CD4-positive, alpha-beta memory T cell (primary cell): ENCODE measurements at regions of chr19 and their contacts with region 1.

Region 1: GRCh38 chr19:58182989-58183816 is at the start of gene ZNF274:
- DNase-seq: peak; percentile 92 to 94 (median 93)
- H3K4me3 ChIP-seq: peak within 1 kb of the TSS; percentile 97 to 100
- H3K4me3 Mint-ChIP-seq: peak within 1 kb of the TSS; percentile 86 to 97 (median 92)
- H3K27ac ChIP-seq: peak within 1 kb of the TSS; percentile 97
- H3K27ac Mint-ChIP-seq: peak within 1 kb of the TSS; percentile 97 to 99 (median 99)
- H3K4me1 ChIP-seq: peaks cover 20% of the 10 kb centered on the region
- H3K4me1 Mint-ChIP-seq: peaks cover 12 to 25% (median 18%) of the 10 kb centered on the region in 4 donors
- H3K27me3 ChIP-seq: no peaks in the 10 kb centered on the region
- H3K27me3 Mint-ChIP-seq: no peaks in the 10 kb centered on the region
- total RNA-seq, gene ZNF274: 76.5 to 77.1 TPM

Region 2: DNA sequence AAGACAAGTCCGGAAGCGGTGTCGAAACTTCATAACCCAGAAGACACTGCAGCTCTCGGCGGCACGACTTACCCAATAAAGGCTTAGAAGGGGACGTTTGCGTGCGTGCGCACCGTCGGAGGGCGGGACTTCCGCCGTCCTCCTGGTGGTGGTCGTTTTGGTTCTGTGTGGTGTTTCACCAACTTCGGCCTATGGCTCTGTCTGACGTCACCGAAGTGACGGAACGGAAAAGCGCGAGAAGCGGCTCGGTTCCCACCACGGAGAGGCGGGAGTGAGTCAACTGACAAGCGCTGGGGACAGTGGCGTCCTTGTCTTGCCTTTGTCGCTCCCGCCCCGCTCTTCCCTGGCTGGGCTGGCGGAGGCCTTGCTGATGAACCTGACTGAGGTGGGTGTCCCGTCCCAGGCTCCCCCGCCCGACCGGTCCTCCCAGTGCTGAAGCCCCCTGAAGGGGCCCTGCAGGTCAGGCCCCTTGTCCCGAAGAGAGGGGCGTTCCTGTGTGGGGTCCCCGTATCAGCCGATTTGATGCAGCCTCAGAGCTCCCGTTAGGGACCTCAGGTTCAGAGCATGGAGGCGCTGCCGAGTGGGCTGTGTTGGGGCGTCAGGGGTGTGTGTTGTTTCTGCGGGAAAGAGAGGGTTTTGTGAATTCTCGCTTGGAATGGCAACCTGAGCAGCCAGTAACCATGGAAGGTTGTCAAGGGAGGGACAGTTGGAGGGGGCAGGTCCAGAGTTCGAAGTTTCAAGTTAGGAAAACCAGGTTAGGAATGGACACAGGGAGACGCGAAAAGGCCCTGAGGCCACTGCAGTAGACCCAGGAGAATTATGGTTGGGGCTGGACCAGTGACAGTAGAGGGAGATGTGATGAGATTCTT is 793.2 kb before region 1 on chr19 and contains the start of gene ZNF548:
- CTCF ChIA-PET with region 1: no interaction called
- POLR2A ChIA-PET with region 1: interaction called, 8 read pairs
- intact Hi-C with region 1: loop called (anchors 1 kb)
- DNase-seq: peak; percentile 93 to 100 (median 95)
- H3K4me3 ChIP-seq: peak within 1 kb of the TSS; percentile 52 to 62
- H3K4me3 Mint-ChIP-seq: peak within 1 kb of the TSS; percentile 97 to 99 (median 98)
- H3K27ac ChIP-seq: peak within 1 kb of the TSS; percentile 95
- H3K27ac Mint-ChIP-seq: peak within 1 kb of the TSS; percentile 98 to 100 (median 99)
- H3K4me1 ChIP-seq: peaks cover 22% of the 10 kb centered on the region
- H3K4me1 Mint-ChIP-seq: peaks cover 22 to 41% (median 31%) of the 10 kb centered on the region in 4 donors
- H3K27me3 ChIP-seq: no peaks in the 10 kb centered on the region
- H3K27me3 Mint-ChIP-seq: peaks cover 0 to 3% of the 10 kb centered on the region in 2 donors
- total RNA-seq, gene ZNF548: 85.4 to 103 TPM

Region 3: GRCh38 chr19:57964748-57965147 is 218.5 kb before region 1 on chr19:
- CTCF ChIA-PET with region 1: no interaction called
- POLR2A ChIA-PET with region 1: no interaction called
- intact Hi-C with region 1: no loop called
- DNase-seq: no peak
- H3K4me3 ChIP-seq: no peak overlapping the region
- H3K4me3 Mint-ChIP-seq: no peak overlapping the region
- H3K27ac ChIP-seq: no peak overlapping the region
- H3K27ac Mint-ChIP-seq: no peak overlapping the region
- H3K4me1 ChIP-seq: no peaks in the 10 kb centered on the region
- H3K4me1 Mint-ChIP-seq: no peaks in the 10 kb centered on the region
- H3K27me3 ChIP-seq: no peaks in the 10 kb centered on the region
- H3K27me3 Mint-ChIP-seq: no peaks in the 10 kb centered on the region

Region 4: DNA sequence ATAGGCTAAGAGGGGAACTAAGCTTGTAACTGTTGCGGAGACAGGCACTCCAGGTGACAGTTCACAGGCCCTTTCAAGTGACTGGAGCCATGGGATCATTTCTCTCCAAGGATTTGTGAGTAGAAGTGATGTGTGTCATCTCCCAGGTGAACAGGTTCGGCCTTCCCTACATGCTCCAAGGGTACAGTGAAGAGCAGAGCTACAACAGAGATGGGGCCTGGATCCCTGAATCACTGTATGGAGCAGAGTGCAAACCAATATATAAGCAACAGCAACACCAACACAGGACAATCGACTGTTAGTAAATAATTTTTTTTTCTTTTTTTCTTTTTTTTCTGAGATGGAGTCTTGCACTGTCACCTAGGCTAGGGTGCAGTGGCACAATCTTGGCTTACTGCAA is 100.2 kb before region 1 on chr19:
- CTCF ChIA-PET with region 1: no interaction called
- POLR2A ChIA-PET with region 1: no interaction called
- intact Hi-C with region 1: no loop called
- DNase-seq: no peak
- H3K4me3 ChIP-seq: no peak overlapping the region
- H3K4me3 Mint-ChIP-seq: no peak overlapping the region
- H3K27ac ChIP-seq: no peak overlapping the region
- H3K27ac Mint-ChIP-seq: no peak overlapping the region
- H3K4me1 ChIP-seq: no peaks in the 10 kb centered on the region
- H3K4me1 Mint-ChIP-seq: no peaks in the 10 kb centered on the region
- H3K27me3 ChIP-seq: no peaks in the 10 kb centered on the region
- H3K27me3 Mint-ChIP-seq: no peaks in the 10 kb centered on the region

Region 5: GRCh38 chr19:58154679-58155648 is 28.2 kb before region 1 on chr19:
- CTCF ChIA-PET with region 1: interaction called, 3 read pairs
- POLR2A ChIA-PET with region 1: interaction called, 5 read pairs
- intact Hi-C with region 1: loop called (anchors 2 kb)
- DNase-seq: peak; percentile 92 to 99 (median 96)
- H3K4me3 ChIP-seq: peak overlapping the region; percentile 88
- H3K4me3 Mint-ChIP-seq: peak overlapping the region; percentile 71 to 89 (median 84)
- H3K27ac ChIP-seq: peak overlapping the region; percentile 80
- H3K27ac Mint-ChIP-seq: peak overlapping the region; percentile 41 to 85 (median 69)
- H3K4me1 ChIP-seq: peaks cover 16% of the 10 kb centered on the region
- H3K4me1 Mint-ChIP-seq: peaks cover 5 to 24% (median 10%) of the 10 kb centered on the region in 4 donors
- H3K27me3 ChIP-seq: no peaks in the 10 kb centered on the region
- H3K27me3 Mint-ChIP-seq: no peaks in the 10 kb centered on the region

Region 6: DNA sequence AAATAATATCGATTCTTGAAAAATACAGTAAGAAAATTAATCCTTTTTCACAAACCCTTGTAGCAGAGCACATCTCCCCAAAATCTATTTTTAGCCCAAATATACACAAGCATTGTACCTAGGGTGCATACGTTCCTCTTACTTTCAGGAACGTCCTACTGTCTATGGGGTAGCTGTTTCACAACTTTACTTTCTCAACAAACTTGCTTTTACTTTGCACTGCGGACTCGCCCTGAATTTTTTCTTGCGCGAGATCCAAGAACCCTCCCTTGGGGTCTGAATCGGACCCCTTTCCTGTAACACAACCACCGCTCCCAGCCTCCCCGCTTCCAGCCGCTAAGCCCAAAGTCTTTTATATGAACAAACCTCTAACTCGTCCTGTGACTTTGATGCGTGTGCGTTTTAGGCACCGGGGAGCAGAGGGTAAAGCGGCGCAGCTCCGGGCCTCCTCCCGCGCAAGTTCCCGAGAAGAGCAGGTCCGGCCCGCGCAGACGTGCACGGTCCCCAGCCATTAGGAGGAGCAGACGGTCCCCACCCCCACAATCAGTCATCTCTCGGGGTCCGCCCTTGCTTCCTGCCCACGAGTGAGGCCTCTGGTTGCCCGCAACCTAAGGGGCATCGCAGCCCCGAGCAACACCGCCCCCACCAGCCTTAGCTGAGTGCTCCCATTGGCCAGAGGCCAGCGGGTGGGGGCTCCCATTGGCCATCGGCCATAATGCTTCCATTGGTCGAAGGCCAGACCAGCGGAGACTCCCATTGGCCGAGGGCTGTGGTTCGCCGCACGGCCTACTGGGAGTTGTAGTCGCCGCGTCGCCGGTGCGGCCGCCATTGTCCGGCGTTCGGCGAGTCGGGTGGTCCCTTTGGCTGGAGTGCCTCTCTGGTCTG is 95.2 kb after region 1 on chr19 and contains the start of gene ZNF8:
- CTCF ChIA-PET with region 1: no interaction called
- POLR2A ChIA-PET with region 1: interaction called, 28 read pairs
- intact Hi-C with region 1: loop called (anchors 1 kb)
- DNase-seq: peak; percentile 93 to 97 (median 95)
- H3K4me3 ChIP-seq: peak within 1 kb of the TSS; percentile 62 to 92
- H3K4me3 Mint-ChIP-seq: peak within 1 kb of the TSS; percentile 93 to 100 (median 98)
- H3K27ac ChIP-seq: peak within 1 kb of the TSS; percentile 73
- H3K27ac Mint-ChIP-seq: peak within 1 kb of the TSS; percentile 91 to 99 (median 96)
- H3K4me1 ChIP-seq: peaks cover 36% of the 10 kb centered on the region
- H3K4me1 Mint-ChIP-seq: peaks cover 28 to 57% (median 36%) of the 10 kb centered on the region in 4 donors
- H3K27me3 ChIP-seq: no peaks in the 10 kb centered on the region
- H3K27me3 Mint-ChIP-seq: no peaks in the 10 kb centered on the region
- total RNA-seq, gene ZNF8: 9.5 to 10.2 TPM

Region 7: DNA sequence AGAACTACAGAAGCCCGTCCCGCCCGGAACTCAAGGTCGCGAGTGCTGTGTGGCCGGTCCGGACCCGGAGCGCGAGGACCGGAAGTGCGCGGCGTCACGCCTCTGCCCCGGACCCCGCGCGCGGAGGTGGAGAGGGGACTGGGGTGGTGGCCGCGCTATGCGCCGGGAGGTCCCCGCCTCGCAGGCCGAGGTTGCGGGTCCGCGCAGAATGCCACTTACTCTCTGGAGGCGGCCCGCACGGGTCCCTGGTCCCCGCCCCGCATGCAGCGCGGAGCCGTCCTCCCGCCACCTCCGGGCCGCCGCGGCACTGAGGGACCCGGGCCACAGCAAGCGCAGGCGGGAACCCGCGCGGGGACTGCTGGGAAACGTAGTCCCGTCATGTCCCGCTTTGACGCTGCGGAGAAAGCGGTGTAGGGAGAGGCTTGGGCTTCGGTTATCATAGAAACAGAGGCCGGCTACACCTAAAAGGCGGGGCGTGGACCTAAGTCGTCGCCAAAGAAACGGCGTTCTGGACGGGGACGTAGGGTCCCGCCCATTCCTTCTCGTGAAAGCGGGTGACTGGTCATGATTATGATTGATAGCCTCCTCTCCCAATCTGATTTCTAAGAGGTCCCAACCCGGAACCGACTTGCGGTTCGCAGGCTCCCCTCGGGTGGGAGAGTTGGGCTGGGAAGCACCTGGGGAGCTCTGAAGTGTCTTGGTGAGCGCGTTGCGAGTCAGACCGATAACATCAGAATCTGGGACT is 197.7 kb after region 1 on chr19 and contains the start of gene ZNF837:
- CTCF ChIA-PET with region 1: no interaction called
- POLR2A ChIA-PET with region 1: interaction called, 7 read pairs
- intact Hi-C with region 1: loop called (anchors 1 kb)
- DNase-seq: peak; percentile 97 to 100 (median 99)
- H3K4me3 ChIP-seq: peak within 1 kb of the TSS; percentile 61 to 85
- H3K4me3 Mint-ChIP-seq: peak within 1 kb of the TSS; percentile 91 to 97 (median 95)
- H3K27ac ChIP-seq: peak within 1 kb of the TSS; percentile 89
- H3K27ac Mint-ChIP-seq: peak within 1 kb of the TSS; percentile 84 to 98 (median 97)
- H3K4me1 ChIP-seq: peaks cover 26% of the 10 kb centered on the region
- H3K4me1 Mint-ChIP-seq: peaks cover 18 to 42% (median 26%) of the 10 kb centered on the region in 4 donors
- H3K27me3 ChIP-seq: no peaks in the 10 kb centered on the region
- H3K27me3 Mint-ChIP-seq: no peaks in the 10 kb centered on the region
- total RNA-seq, gene ZNF837: 3.4 to 3.5 TPM

Region 8: GRCh38 chr19:58466760-58467589 is 283.8 kb after region 1 on chr19 and contains the start of gene ZNF324:
- CTCF ChIA-PET with region 1: no interaction called
- POLR2A ChIA-PET with region 1: no interaction called
- intact Hi-C with region 1: loop called (anchors 2 kb)
- DNase-seq: peak; percentile 94 to 96 (median 95)
- H3K4me3 ChIP-seq: peak within 1 kb of the TSS; percentile 52 to 83
- H3K4me3 Mint-ChIP-seq: peak within 1 kb of the TSS; percentile 82 to 91 (median 87)
- H3K27ac ChIP-seq: peak within 1 kb of the TSS; percentile 92
- H3K27ac Mint-ChIP-seq: peak within 1 kb of the TSS; percentile 80 to 93 (median 91)
- H3K4me1 ChIP-seq: peaks cover 20% of the 10 kb centered on the region
- H3K4me1 Mint-ChIP-seq: peaks cover 14 to 32% (median 22%) of the 10 kb centered on the region in 4 donors
- H3K27me3 ChIP-seq: no peaks in the 10 kb centered on the region
- H3K27me3 Mint-ChIP-seq: peaks cover 0 to 1% of the 10 kb centered on the region in 2 donors
- total RNA-seq, gene ZNF324: 27.6 TPM

Region 9: GRCh38 chr19:58519355-58520256 is 336.4 kb after region 1 on chr19 and contains the start of gene ZBTB45:
- CTCF ChIA-PET with region 1: no interaction called
- POLR2A ChIA-PET with region 1: interaction called, 27 read pairs
- intact Hi-C with region 1: loop called (anchors 1 kb)
- DNase-seq: peak; percentile 88 to 92 (median 89)
- H3K4me3 ChIP-seq: peak within 1 kb of the TSS; percentile 81 to 88
- H3K4me3 Mint-ChIP-seq: peak within 1 kb of the TSS; percentile 92 to 97 (median 95)
- H3K27ac ChIP-seq: peak within 1 kb of the TSS; percentile 82
- H3K27ac Mint-ChIP-seq: peak within 1 kb of the TSS; percentile 97 to 99 (median 98)
- H3K4me1 ChIP-seq: peaks cover 28% of the 10 kb centered on the region
- H3K4me1 Mint-ChIP-seq: peaks cover 14 to 53% (median 30%) of the 10 kb centered on the region in 4 donors
- H3K27me3 ChIP-seq: no peaks in the 10 kb centered on the region
- H3K27me3 Mint-ChIP-seq: no peaks in the 10 kb centered on the region
- total RNA-seq, gene ZBTB45: 19.8 TPM